Activated B cell treated with CpG ODN at 0.5 μM for 24 hours (primary cell): ENCODE measurements at regions of chr19 and their contacts with region 1.

Region 1: GRCh38 chr19:2475702-2476450 is at the start of gene GADD45B:
- DNase-seq: peak; percentile 96
- ATAC-seq: peak; percentile 59
- H3K4me3 Mint-ChIP-seq: peak within 1 kb of the TSS; percentile 99
- H3K27ac Mint-ChIP-seq: peak within 1 kb of the TSS; percentile 93
- H3K4me1 Mint-ChIP-seq: peaks cover 32% of the 10 kb centered on the region
- H3K27me3 Mint-ChIP-seq: no peaks in the 10 kb centered on the region
- CTCF ChIP-seq: no peak
- total RNA-seq, gene GADD45B: 291 and 302 TPM in 2 replicates

Region 2: GRCh38 chr19:1652471-1653299 is 823.2 kb before region 1 on chr19 and contains the start of gene TCF3:
- CTCF ChIA-PET with region 1: no interaction called
- POLR2A ChIA-PET with region 1: no interaction called
- intact Hi-C with region 1: loop called (anchors 5 kb)
- DNase-seq: peak; percentile 99
- ATAC-seq: peak; percentile 82
- H3K4me3 Mint-ChIP-seq: peak within 1 kb of the TSS; percentile 91
- H3K27ac Mint-ChIP-seq: peak within 1 kb of the TSS; percentile 95
- H3K4me1 Mint-ChIP-seq: peaks cover 68% of the 10 kb centered on the region
- H3K27me3 Mint-ChIP-seq: no peaks in the 10 kb centered on the region
- CTCF ChIP-seq: no peak
- total RNA-seq, gene TCF3: 139 and 143 TPM in 2 replicates

Region 3: DNA sequence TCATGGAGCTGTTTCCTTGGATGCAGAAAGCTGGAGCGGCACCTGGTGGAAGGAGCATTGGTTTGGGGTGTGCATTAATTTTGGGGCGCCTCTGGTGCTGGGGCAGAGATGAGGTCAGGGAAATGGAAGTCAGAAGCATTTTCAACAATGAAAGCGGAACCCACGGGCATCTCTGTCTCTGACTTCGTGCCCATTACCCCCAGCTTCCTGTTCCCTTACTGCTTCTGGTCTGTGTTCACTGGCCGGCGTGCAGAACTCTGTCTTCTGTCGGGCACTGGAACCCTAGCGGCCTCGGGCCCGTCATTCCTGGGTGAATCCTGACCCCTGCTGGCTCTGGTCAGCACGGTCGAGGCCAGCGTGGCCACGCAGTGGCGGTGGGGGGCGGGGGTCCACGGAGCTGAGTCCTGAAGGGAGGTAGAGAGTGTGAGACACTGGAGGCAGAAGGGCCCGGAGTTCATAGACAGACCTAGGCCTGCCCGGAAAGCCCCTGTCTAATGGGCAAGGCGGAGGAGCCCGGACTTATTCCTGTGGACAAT is 160.0 kb before region 1 on chr19:
- CTCF ChIA-PET with region 1: no interaction called
- POLR2A ChIA-PET with region 1: interaction called, 14 read pairs
- intact Hi-C with region 1: no loop called
- DNase-seq: peak; percentile 54
- ATAC-seq: peak; percentile 74
- H3K4me3 Mint-ChIP-seq: peak overlapping the region; percentile 59
- H3K27ac Mint-ChIP-seq: peak overlapping the region; percentile 82
- H3K4me1 Mint-ChIP-seq: peaks cover 55% of the 10 kb centered on the region
- H3K27me3 Mint-ChIP-seq: no peaks in the 10 kb centered on the region
- CTCF ChIP-seq: no peak

Region 4: DNA sequence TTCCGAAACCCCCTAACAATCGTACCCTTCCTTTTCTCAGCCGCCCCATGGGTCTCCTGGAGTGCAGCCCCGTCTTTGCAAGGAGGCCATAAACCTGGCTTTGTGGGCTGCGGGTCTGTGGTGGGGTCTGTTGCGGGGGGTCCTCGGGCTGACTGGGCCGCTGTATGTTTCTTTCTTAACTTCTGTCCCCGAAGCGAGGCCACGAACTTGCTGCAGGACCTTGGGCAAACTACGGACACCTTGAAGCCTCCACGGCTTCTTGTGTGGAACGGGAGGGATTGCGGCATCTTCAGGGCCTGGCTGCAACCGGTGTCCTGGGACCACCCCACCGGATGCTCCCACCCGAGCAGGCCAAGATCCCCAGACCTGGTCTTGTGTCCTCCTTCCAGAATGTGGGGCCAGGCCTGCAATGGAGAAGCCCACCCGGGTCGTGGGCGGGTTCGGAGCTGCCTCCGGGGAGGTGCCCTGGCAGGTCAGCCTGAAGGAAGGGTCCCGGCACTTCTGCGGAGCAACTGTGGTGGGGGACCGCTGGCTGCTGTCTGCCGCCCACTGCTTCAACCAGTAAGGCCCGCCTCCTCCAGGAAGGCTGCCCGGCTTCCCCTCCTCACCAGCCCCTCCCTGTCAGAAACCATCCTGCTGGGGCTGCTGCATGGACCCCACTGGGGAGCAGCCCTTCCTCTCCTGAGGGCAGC is 60.4 kb before region 1 on chr19:
- CTCF ChIA-PET with region 1: no interaction called
- POLR2A ChIA-PET with region 1: no interaction called
- intact Hi-C with region 1: no loop called
- DNase-seq: no peak
- ATAC-seq: no peak
- H3K4me3 Mint-ChIP-seq: no peak overlapping the region
- H3K27ac Mint-ChIP-seq: no peak overlapping the region
- H3K4me1 Mint-ChIP-seq: no peaks in the 10 kb centered on the region
- H3K27me3 Mint-ChIP-seq: peaks cover 2% of the 10 kb centered on the region
- CTCF ChIP-seq: no peak

Region 5: DNA sequence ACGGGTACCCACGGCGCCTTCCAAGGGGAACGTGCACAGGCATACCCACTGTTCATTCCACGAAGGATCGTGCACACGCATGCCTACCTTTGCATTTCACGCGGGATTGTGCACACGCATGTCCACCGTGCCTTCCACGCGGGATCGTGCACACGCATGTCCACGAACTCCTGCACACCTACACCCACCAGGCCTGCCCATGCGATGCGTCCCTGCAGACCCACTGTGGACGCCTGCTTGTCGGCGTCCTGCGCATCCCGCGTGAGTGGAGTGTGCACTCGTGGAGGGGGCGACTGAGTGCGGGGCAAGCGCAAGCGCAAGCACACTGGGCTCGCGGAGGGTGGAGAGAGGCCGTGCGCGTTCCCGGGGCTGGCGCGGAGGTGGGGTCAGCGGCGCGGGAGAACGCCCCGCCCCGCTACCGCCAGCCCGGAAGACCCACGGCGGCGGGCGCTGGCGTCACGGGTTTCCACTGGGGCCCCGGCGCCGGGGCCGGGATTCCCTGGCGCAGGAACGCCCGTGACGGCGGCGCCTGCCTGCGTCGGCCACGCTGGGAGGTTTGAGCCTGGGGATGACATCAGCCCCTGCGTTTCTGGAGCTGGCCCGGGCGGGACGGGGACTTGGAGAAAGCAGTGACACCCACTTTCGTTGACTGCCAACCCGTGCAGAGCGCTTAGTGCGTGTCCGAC is 18.7 kb after region 1 on chr19:
- CTCF ChIA-PET with region 1: no interaction called
- POLR2A ChIA-PET with region 1: interaction called, 83 read pairs
- intact Hi-C with region 1: loop called (anchors 1 kb)
- DNase-seq: peak; percentile 54
- ATAC-seq: peak; percentile 78
- H3K4me3 Mint-ChIP-seq: peak overlapping the region; percentile 81
- H3K27ac Mint-ChIP-seq: no peak overlapping the region
- H3K4me1 Mint-ChIP-seq: peaks cover 45% of the 10 kb centered on the region
- H3K27me3 Mint-ChIP-seq: peaks cover 26% of the 10 kb centered on the region
- CTCF ChIP-seq: no peak

Region 6: GRCh38 chr19:2543463-2544442 is 67.9 kb after region 1 on chr19:
- CTCF ChIA-PET with region 1: interaction called, 3 read pairs
- POLR2A ChIA-PET with region 1: interaction called, 121 read pairs
- intact Hi-C with region 1: loop called (anchors 2 kb)
- DNase-seq: peak; percentile 68
- ATAC-seq: peak; percentile 72
- H3K4me3 Mint-ChIP-seq: peak overlapping the region; percentile 66
- H3K27ac Mint-ChIP-seq: peak overlapping the region; percentile 74
- H3K4me1 Mint-ChIP-seq: peaks cover 37% of the 10 kb centered on the region
- H3K27me3 Mint-ChIP-seq: no peaks in the 10 kb centered on the region
- CTCF ChIP-seq: no peak

Region 7: DNA sequence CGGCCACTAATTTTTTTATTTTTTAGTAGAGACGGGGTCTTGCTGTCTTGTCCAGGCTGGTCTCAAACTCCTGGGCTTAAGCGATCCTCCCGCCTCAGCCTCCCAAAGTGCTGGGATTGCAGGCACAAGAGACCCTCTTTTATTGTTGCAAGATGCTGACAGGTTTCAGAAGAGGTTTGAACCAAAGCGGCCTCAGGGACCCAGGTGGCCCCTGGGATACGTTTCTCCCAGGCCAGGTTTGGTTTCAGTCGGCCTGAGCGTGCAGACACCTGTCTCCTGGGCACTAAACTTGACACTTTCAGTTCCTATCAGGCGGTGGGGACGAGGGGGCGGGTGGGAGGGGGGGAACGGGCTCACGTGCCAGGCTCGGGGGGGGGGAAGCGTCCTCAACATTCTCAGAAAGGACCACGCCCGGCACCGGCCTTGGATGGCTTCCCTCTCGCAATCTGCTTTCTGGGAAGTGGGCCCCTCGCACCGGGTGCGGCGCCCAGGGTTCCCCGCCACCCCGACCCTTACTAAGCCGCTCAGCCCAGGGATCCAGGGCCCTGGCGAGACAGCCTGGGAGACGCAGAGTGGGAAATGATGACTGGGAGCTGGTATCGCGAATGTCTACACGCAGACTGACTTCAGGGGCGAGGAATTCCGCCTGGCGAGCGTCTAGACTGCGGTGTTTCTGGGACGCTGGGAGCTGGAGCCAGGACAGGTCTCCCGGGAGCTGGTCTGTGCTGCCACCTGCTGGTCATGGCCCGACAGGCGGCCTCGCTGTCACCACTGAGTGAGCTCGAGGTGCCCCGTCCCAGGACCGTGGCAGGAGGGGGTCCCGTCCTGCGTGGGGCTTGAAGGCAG is 135.0 kb after region 1 on chr19:
- CTCF ChIA-PET with region 1: interaction called, 131 read pairs
- POLR2A ChIA-PET with region 1: interaction called, 979 read pairs
- intact Hi-C with region 1: loop called (anchors 1 kb)
- DNase-seq: peak; percentile 89
- ATAC-seq: peak; percentile 43
- H3K4me3 Mint-ChIP-seq: peak overlapping the region; percentile 89
- H3K27ac Mint-ChIP-seq: peak overlapping the region; percentile 94
- H3K4me1 Mint-ChIP-seq: peaks cover 86% of the 10 kb centered on the region
- H3K27me3 Mint-ChIP-seq: no peaks in the 10 kb centered on the region
- CTCF ChIP-seq: peak; percentile 52

Region 8: GRCh38 chr19:2750808-2751443 is 275.1 kb after region 1 on chr19:
- CTCF ChIA-PET with region 1: no interaction called
- POLR2A ChIA-PET with region 1: no interaction called
- intact Hi-C with region 1: loop called (anchors 1 kb)
- DNase-seq: no peak
- ATAC-seq: no peak
- H3K4me3 Mint-ChIP-seq: no peak overlapping the region
- H3K27ac Mint-ChIP-seq: no peak overlapping the region
- H3K4me1 Mint-ChIP-seq: peaks cover 12% of the 10 kb centered on the region
- H3K27me3 Mint-ChIP-seq: no peaks in the 10 kb centered on the region
- CTCF ChIP-seq: no peak